CD8-positive, alpha-beta T cell (primary cell): ENCODE measurements at regions of chr15 and their contacts with region 1.

Region 1: DNA sequence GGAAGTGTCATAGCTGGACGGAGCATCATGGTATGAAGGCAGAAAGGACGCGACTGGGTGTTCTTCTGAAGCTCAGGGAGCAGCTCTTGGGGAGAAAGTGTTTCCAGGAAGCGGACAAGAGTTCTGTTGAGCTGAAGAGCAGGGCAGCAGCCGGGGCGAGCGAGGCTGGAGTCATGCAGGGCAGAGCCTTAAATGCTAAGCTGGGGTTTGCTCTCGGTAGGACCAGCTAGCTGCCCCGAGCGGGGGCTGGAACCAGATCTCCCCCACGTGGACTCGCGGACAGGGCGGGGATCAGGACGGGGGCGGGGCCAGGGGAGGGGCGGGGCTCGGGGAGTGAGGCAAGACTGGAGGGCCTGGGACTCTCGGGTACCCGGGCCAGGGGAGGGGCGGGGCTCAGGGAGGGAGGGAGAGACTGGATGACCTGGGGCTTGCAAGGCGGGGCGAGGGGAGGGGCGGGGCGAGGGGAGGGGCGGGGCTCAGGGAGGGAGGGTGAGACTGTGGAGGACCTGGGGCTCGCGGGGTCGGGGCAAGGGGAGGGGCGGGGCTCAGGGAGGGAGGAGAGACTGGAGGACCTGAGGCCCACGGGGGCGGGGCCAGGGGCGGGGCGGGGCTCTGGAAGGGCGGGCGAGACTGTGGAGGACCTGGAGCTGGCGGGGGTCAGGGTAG is 486 bp upstream of the FAH start:
- DNase-seq: peak; percentile 74 to 92 (median 86)
- ATAC-seq: peak; percentile 76
- H3K4me3 ChIP-seq: peak overlapping the region; percentile 54 to 68
- H3K4me3 Mint-ChIP-seq: peak overlapping the region; percentile 87
- H3K27ac ChIP-seq: peak overlapping the region in 1 of 2 experiments; percentile 61
- H3K27ac Mint-ChIP-seq: peak overlapping the region; percentile 75
- H3K4me1 ChIP-seq: peaks cover 14% of the 10 kb centered on the region
- H3K4me1 Mint-ChIP-seq: peaks cover 20% of the 10 kb centered on the region
- H3K27me3 ChIP-seq: no peaks in the 10 kb centered on the region
- H3K27me3 Mint-ChIP-seq: no peaks in the 10 kb centered on the region
- CTCF ChIP-seq: no peak

Region 2: GRCh38 chr15:79896637-79897379 is 255.5 kb before region 1 on chr15 and contains the start of gene MTHFS:
- CTCF ChIA-PET with region 1: no interaction called
- POLR2A ChIA-PET with region 1: no interaction called
- intact Hi-C with region 1: loop called (anchors 1 to 2 kb)
- DNase-seq: peak; percentile 61 to 91 (median 79)
- ATAC-seq: peak; percentile 84
- H3K4me3 ChIP-seq: peak within 1 kb of the TSS; percentile 75 to 96
- H3K4me3 Mint-ChIP-seq: peak within 1 kb of the TSS; percentile 96
- H3K27ac ChIP-seq: peak within 1 kb of the TSS; percentile 94 to 95
- H3K27ac Mint-ChIP-seq: peak within 1 kb of the TSS; percentile 100
- H3K4me1 ChIP-seq: peaks cover 28% of the 10 kb centered on the region
- H3K4me1 Mint-ChIP-seq: peaks cover 40% of the 10 kb centered on the region
- H3K27me3 ChIP-seq: no peaks in the 10 kb centered on the region
- H3K27me3 Mint-ChIP-seq: no peaks in the 10 kb centered on the region
- CTCF ChIP-seq: peak; percentile 36
- total RNA-seq, gene MTHFS: 5.1 to 7.8 TPM

Region 3: GRCh38 chr15:80105595-80106450 is 46.5 kb before region 1 on chr15:
- CTCF ChIA-PET with region 1: no interaction called
- POLR2A ChIA-PET with region 1: no interaction called
- intact Hi-C with region 1: loop called in 1 of 2 experiments (anchors 1 kb)
- DNase-seq: no peak
- ATAC-seq: no peak
- H3K4me3 ChIP-seq: no peak overlapping the region
- H3K4me3 Mint-ChIP-seq: no peak overlapping the region
- H3K27ac ChIP-seq: no peak overlapping the region
- H3K27ac Mint-ChIP-seq: no peak overlapping the region
- H3K4me1 ChIP-seq: peaks cover 2% of the 10 kb centered on the region
- H3K4me1 Mint-ChIP-seq: peaks cover 52% of the 10 kb centered on the region
- H3K27me3 ChIP-seq: no peaks in the 10 kb centered on the region
- H3K27me3 Mint-ChIP-seq: no peaks in the 10 kb centered on the region
- CTCF ChIP-seq: no peak

Region 4: DNA sequence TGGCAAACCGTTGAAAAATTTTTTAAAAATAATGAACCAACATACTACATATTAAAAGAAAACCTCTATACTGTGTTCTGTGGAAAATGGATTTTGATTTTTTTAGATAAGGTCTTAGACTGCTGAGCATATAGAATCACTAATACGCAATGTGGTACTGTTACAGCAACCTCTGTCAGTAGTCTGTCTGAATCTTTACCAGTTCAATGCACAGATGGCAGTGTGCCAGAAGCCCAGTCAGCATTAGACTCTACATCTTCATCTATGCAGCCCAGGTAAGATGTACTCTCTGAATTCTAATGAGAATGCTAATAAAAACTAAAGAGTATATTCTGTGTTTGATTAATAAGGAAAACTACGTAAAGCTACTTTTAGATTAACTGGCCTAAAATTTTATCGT is 30.8 kb before region 1 on chr15:
- CTCF ChIA-PET with region 1: no interaction called
- POLR2A ChIA-PET with region 1: no interaction called
- intact Hi-C with region 1: no loop called
- DNase-seq: no peak
- ATAC-seq: no peak
- H3K4me3 ChIP-seq: no peak overlapping the region
- H3K4me3 Mint-ChIP-seq: no peak overlapping the region
- H3K27ac ChIP-seq: no peak overlapping the region
- H3K27ac Mint-ChIP-seq: no peak overlapping the region
- H3K4me1 ChIP-seq: no peaks in the 10 kb centered on the region
- H3K4me1 Mint-ChIP-seq: peaks cover 19% of the 10 kb centered on the region
- H3K27me3 ChIP-seq: no peaks in the 10 kb centered on the region
- H3K27me3 Mint-ChIP-seq: no peaks in the 10 kb centered on the region
- CTCF ChIP-seq: no peak

Region 5: DNA sequence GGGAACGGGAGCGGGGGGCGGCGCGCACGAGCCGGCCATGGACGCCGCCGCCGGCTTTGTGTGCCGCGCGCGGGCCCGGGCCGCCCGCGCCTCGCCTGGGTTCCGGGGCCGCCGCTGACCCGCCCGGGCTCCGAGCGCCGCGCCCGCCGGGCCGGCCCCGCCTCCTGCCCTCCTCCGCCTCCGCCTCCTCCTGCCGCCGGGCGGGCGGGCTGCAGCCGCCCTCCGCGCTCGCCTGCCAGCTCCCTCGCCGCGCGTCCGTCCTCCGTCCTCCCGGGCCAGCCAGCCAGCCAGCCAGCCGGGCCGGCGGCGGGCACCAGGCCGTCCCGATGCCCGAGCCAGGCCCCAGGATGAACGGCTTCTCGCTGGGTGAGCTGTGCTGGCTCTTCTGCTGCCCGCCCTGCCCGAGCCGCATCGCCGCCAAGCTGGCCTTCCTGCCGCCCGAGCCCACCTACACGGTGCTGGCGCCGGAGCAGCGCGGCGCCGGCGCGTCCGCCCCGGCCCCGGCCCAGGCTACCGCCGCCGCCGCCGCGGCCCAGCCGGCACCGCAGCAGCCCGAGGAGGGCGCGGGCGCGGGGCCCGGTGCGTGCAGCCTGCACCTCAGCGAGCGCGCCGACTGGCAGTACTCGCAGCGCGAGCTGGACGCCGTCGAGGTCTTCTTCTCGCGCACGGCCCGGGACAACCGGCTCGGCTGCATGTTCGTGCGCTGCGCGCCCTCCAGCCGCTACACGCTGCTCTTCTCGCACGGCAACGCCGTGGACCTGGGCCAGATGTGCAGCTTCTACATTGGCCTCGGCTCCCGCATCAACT is 543.0 kb after region 1 on chr15 and contains the start of gene ABHD17C:
- CTCF ChIA-PET with region 1: no interaction called
- POLR2A ChIA-PET with region 1: no interaction called
- intact Hi-C with region 1: loop called in 1 of 2 experiments (anchors 5 kb)
- DNase-seq: peak in 8 of 9 experiments; percentile 14 to 70 (median 42)
- ATAC-seq: peak; percentile 69
- H3K4me3 ChIP-seq: peak within 1 kb of the TSS; percentile 58 to 63
- H3K4me3 Mint-ChIP-seq: peak within 1 kb of the TSS; percentile 95
- H3K27ac ChIP-seq: peak within 1 kb of the TSS; percentile 20 to 57
- H3K27ac Mint-ChIP-seq: peak within 1 kb of the TSS; percentile 86
- H3K4me1 ChIP-seq: peaks cover 11% of the 10 kb centered on the region
- H3K4me1 Mint-ChIP-seq: peaks cover 23% of the 10 kb centered on the region
- H3K27me3 ChIP-seq: no peaks in the 10 kb centered on the region
- H3K27me3 Mint-ChIP-seq: peaks cover 3% of the 10 kb centered on the region
- CTCF ChIP-seq: no peak
- total RNA-seq, gene ABHD17C: 0.75 to 1.1 TPM

Region 6: GRCh38 chr15:81000624-81001151 is 848.4 kb after region 1 on chr15 and contains the start of gene TLNRD1:
- CTCF ChIA-PET with region 1: no interaction called
- POLR2A ChIA-PET with region 1: no interaction called
- intact Hi-C with region 1: loop called in 1 of 2 experiments (anchors 5 kb)
- DNase-seq: peak; percentile 49 to 93 (median 81)
- ATAC-seq: peak; percentile 59
- H3K4me3 ChIP-seq: peak within 1 kb of the TSS; percentile 74 to 78
- H3K4me3 Mint-ChIP-seq: peak within 1 kb of the TSS; percentile 96
- H3K27ac ChIP-seq: peak within 1 kb of the TSS; percentile 84 to 88
- H3K27ac Mint-ChIP-seq: peak within 1 kb of the TSS; percentile 98
- H3K4me1 ChIP-seq: peaks cover 42% of the 10 kb centered on the region
- H3K4me1 Mint-ChIP-seq: peaks cover 49% of the 10 kb centered on the region
- H3K27me3 ChIP-seq: no peaks in the 10 kb centered on the region
- H3K27me3 Mint-ChIP-seq: no peaks in the 10 kb centered on the region
- CTCF ChIP-seq: no peak
- total RNA-seq, gene TLNRD1: 15.3 to 15.6 TPM